Activated CD8-positive, alpha-beta T cell treated with anti-CD3 and anti-CD28 coated beads, Interleukin-2, amount 10 ng/mL, durations not matched to agents 7 days and 5 days (primary cell): ENCODE measurements at regions of chr15 and their contacts with region 1.

Region 1: GRCh38 chr15:55250392-55250791 is 39.2 kb downstream of the RAB27A start:
- DNase-seq: no peak
- ATAC-seq: no peak
- H3K4me3 Mint-ChIP-seq: no peak overlapping the region
- H3K27ac Mint-ChIP-seq: peak overlapping the region; percentile 90
- H3K4me1 Mint-ChIP-seq: peaks cover 77% of the 10 kb centered on the region
- H3K27me3 Mint-ChIP-seq: no peaks in the 10 kb centered on the region

Region 2: GRCh38 chr15:55124616-55125015 is 125.8 kb before region 1 on chr15:
- CTCF ChIA-PET with region 1: no interaction called
- POLR2A ChIA-PET with region 1: no interaction called
- DNase-seq: no peak
- ATAC-seq: no peak
- H3K4me3 Mint-ChIP-seq: no peak overlapping the region
- H3K27ac Mint-ChIP-seq: no peak overlapping the region
- H3K4me1 Mint-ChIP-seq: no peaks in the 10 kb centered on the region
- H3K27me3 Mint-ChIP-seq: peaks cover 12% of the 10 kb centered on the region

Region 3: GRCh38 chr15:55231455-55231854 is 18.9 kb before region 1 on chr15:
- CTCF ChIA-PET with region 1: interaction called, 17 read pairs
- POLR2A ChIA-PET with region 1: interaction called, 3 read pairs
- DNase-seq: no peak
- ATAC-seq: no peak
- H3K4me3 Mint-ChIP-seq: no peak overlapping the region
- H3K27ac Mint-ChIP-seq: no peak overlapping the region
- H3K4me1 Mint-ChIP-seq: peaks cover 45% of the 10 kb centered on the region
- H3K27me3 Mint-ChIP-seq: no peaks in the 10 kb centered on the region

Region 4: GRCh38 chr15:55279746-55280351 is 29.5 kb after region 1 on chr15:
- CTCF ChIA-PET with region 1: interaction called, 7 read pairs
- POLR2A ChIA-PET with region 1: interaction called, 14 read pairs
- DNase-seq: peak; percentile 66
- ATAC-seq: peak; percentile 79
- H3K4me3 Mint-ChIP-seq: peak overlapping the region; percentile 57
- H3K27ac Mint-ChIP-seq: peak overlapping the region; percentile 97
- H3K4me1 Mint-ChIP-seq: peaks cover 93% of the 10 kb centered on the region
- H3K27me3 Mint-ChIP-seq: no peaks in the 10 kb centered on the region